ENCODE measurements at regions of chr1 and their contacts with region 1.

Region 1: GRCh38 chr1:24642481-24643361 is at the start of gene SRRM1:
- DNase-seq: peak; percentile 100
- total RNA-seq, gene SRRM1: 6.1 and 9.8 TPM in 2 replicates

Region 2: GRCh38 chr1:24415334-24415909 is 227.3 kb before region 1 on chr1 and contains the start of gene NIPAL3:
- in situ Hi-C with region 1: loop called (anchors 25 kb)
- DNase-seq: peak; percentile 96
- total RNA-seq, gene NIPAL3: 10.4 and 11.8 TPM in 2 replicates

Region 3: GRCh38 chr1:24438423-24438901 is 204.3 kb before region 1 on chr1:
- in situ Hi-C with region 1: no loop called
- DNase-seq: no peak

Region 4: DNA sequence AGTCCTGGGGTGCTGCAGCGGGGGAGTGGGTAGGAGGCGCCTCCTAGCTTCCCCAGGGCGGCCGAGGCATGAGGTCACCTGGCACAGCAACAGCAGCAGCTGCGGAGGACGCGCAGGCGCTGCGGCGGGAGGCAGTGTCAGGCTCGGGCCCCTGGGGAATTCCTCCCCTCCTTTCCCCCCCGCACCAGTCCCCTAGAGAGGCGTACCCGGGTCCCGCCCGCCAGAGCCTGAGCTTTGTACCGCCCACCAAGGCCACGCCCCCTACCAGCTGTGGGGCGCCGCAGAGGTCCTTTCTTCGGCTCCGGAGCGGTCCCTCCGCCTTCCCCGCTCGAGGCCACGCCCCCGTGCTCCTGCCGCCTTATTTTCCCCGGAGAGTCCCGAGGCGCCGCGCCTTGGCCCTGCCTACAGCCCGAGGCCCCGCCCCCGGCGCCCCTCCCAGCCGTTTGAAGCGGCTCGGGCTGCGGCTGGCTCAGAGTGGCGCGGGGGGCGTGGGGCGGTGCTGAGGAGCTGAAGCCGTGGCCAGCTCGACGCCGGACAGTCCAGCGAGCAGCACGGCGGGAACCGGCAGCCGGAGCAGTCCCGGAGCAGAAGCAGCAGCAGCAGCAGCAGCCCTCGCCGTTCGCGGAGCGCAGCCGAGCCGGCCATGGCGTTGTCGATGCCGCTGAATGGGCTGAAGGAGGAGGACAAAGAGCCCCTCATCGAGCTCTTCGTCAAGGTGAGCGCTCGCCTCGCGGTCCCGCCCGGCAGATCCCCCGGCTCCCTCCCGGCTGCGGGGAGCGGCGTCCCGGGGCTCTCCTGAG is 102.4 kb after region 1 on chr1 and contains the start of gene CLIC4:
- in situ Hi-C with region 1: no loop called
- DNase-seq: peak; percentile 100
- total RNA-seq, gene CLIC4: 27.3 and 29.5 TPM in 2 replicates